ENCODE measurements at regions of chr4 and their contacts with region 1.

Region 1: DNA sequence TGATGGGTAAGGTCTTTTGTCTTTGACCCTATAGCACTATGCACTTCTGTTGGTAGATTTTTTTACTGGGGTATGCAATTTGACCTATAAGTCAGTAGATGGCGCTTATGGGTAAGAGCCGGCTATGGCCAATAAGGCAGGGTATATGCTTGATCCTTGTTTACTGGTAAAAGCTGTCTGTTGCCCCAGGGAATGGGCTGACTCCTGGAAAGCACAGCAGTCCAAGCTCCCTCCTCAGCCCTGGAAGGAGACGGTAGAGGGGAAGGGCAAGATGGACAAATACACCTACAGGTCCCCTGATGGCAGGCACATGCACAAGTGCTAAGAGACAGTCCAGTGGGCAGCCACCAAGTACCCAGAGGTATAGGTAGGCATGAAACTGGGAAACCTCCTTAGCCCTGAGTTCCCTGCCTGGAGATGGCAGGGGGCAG is 63.7 kb downstream of the ADAMTS3 start:
- DNase-seq: peak in 1 of 5 donors; percentile 8
- ATAC-seq: peak; percentile 55 to 75 (median 68)
- H3K4me3 ChIP-seq: no peak overlapping the region
- H3K27ac ChIP-seq: no peak overlapping the region
- H3K4me1 ChIP-seq: no peaks in the 10 kb centered on the region
- H3K27me3 ChIP-seq: no peaks in the 10 kb centered on the region
- CTCF ChIP-seq: peak; percentile 46 to 80 (median 66)
- POLR2A ChIP-seq: no peak

Region 2: DNA sequence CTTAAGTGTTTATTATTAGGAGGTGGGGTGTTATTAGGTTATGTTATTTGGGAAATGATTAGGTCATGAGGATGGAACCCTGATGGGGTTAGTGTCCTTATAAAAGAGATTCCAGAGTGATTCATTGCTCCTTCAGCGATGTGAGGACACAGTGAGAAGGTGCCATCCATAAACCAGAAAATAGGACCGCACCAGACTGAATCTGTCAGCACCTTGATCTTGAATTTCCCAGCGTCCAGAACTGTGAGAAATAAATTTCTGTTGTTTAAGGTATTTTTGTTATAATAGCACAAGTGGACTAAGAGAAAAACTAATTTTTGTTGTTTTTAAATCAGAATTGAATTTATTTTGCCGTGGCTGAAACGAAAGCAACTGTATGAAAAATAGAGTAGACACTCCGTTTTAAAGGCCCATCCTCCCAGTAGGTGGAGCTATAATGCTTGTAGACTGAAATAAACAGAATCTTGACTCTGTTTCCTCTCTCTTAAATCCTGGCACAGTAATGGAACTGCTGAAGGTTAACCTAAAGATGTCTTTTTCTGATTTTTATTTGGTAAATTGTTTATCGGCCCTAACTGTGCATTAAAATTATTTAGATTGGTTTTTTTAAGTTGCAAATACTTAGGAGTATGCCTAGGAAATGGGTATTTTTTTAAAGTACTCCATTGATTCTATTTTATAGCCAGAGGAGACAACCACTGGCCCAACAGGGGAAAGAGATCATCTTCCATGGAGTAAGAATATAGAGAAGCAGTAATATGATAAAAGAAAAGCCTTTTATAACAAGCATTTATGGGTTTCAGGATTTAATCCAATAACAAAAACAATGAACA is 196.9 kb after region 1 on chr4:
- intact Hi-C with region 1: loop called in 4 of 10 experiments (anchors 5 to 10 kb)
- DNase-seq: peak in 1 of 5 donors; percentile 10
- ATAC-seq: peak in 2 of 4 donors; percentile 36 to 52
- H3K4me3 ChIP-seq: peak overlapping the region in 10 of 12 donors; percentile 27 to 54 (median 47)
- H3K27ac ChIP-seq: no peak overlapping the region
- H3K4me1 ChIP-seq: no peaks in the 10 kb centered on the region
- H3K27me3 ChIP-seq: no peaks in the 10 kb centered on the region
- CTCF ChIP-seq: peak; percentile 32 to 79 (median 62)
- POLR2A ChIP-seq: no peak

Region 3: GRCh38 chr4:72909461-72909860 is 404.1 kb after region 1 on chr4:
- intact Hi-C with region 1: loop called in 2 of 10 experiments (anchors 10 kb)
- DNase-seq: no peak
- ATAC-seq: peak in 2 of 4 donors; percentile 39 to 46
- H3K4me3 ChIP-seq: no peak overlapping the region
- H3K27ac ChIP-seq: no peak overlapping the region
- H3K4me1 ChIP-seq: no peaks in the 10 kb centered on the region
- H3K27me3 ChIP-seq: no peaks in the 10 kb centered on the region
- CTCF ChIP-seq: peak in 6 of 12 donors; percentile 11 to 42 (median 33)
- POLR2A ChIP-seq: no peak

Region 4: GRCh38 chr4:72919937-72920336 is 414.6 kb after region 1 on chr4:
- intact Hi-C with region 1: loop called in 1 of 10 experiments (anchors 10 kb)
- DNase-seq: no peak
- ATAC-seq: no peak
- H3K4me3 ChIP-seq: no peak overlapping the region
- H3K27ac ChIP-seq: no peak overlapping the region
- H3K4me1 ChIP-seq: no peaks in the 10 kb centered on the region
- H3K27me3 ChIP-seq: no peaks in the 10 kb centered on the region
- CTCF ChIP-seq: no peak
- POLR2A ChIP-seq: no peak

Region 5: GRCh38 chr4:73019462-73020047 is 514.2 kb after region 1 on chr4:
- intact Hi-C with region 1: loop called (anchors 2 to 5 kb)
- DNase-seq: no peak
- ATAC-seq: no peak
- H3K4me3 ChIP-seq: no peak overlapping the region
- H3K27ac ChIP-seq: no peak overlapping the region
- H3K4me1 ChIP-seq: no peaks in the 10 kb centered on the region
- H3K27me3 ChIP-seq: no peaks in the 10 kb centered on the region
- CTCF ChIP-seq: peak; percentile 46 to 86 (median 70)
- POLR2A ChIP-seq: no peak

Region 6: DNA sequence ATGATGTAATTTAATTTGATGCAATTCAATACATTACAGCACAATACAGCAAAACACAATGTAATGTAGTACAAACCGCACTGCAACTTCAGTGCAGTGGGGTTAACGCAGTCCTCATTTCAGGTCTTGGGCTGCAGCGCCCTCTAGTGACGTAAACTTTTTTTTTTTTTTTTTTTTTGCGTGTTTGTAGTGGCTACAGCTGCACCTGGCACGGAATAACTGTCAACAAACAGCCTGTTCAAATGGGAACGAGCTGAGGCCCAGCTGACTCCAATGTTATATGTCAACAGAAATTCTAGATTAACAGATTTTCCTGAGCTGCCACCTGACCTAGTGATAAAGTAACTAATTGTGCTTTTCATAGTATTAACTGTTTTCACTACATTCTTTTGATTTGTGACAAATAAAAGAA is 1148.4 kb after region 1 on chr4:
- intact Hi-C with region 1: loop called in 1 of 10 experiments (anchors 10 kb)
- DNase-seq: no peak
- ATAC-seq: peak in 3 of 4 donors; percentile 24 to 50 (median 46)
- H3K4me3 ChIP-seq: no peak overlapping the region
- H3K27ac ChIP-seq: no peak overlapping the region
- H3K4me1 ChIP-seq: peaks cover 0 to 5% (median 0%) of the 10 kb centered on the region in 12 donors
- H3K27me3 ChIP-seq: peaks cover 0 to 12% (median 0%) of the 10 kb centered on the region in 9 donors
- CTCF ChIP-seq: peak; percentile 43 to 76 (median 66)
- POLR2A ChIP-seq: no peak